ENCODE measurements at regions of chr4 and their contacts with region 1.

Region 1: GRCh38 chr4:139501927-139502899 is 48.3 kb downstream of the RAB33B start:
- DNase-seq: no peak
- ATAC-seq: no peak
- H3K4me3 Mint-ChIP-seq: no peak overlapping the region
- H3K27ac Mint-ChIP-seq: no peak overlapping the region
- H3K4me1 Mint-ChIP-seq: peaks cover 7% of the 10 kb centered on the region
- H3K27me3 Mint-ChIP-seq: peaks cover 2% of the 10 kb centered on the region

Region 2: DNA sequence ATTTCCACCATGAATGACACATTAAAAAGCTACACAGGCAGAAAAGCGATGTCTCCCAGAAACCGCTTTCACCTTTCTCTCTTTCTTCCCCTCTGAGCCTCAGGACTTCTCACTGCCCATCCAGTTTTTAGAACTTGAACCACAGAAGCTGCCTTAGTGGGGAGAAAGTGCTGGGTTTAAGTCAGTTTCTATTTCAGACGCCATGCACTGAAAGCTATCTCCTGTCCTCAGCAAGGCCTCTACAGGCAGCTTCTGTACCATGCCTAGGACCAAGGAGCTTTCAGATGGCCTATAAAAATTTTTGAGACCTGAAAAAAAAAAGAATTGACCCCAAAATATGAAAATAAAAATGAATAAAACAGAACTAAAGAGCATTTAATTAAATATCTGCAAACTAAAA is 13.8 kb before region 1 on chr4:
- CTCF ChIA-PET with region 1: interaction called, 10 read pairs
- POLR2A ChIA-PET with region 1: no interaction called
- DNase-seq: no peak
- ATAC-seq: no peak
- H3K4me3 Mint-ChIP-seq: no peak overlapping the region
- H3K27ac Mint-ChIP-seq: no peak overlapping the region
- H3K4me1 Mint-ChIP-seq: no peaks in the 10 kb centered on the region
- H3K27me3 Mint-ChIP-seq: peaks cover 4% of the 10 kb centered on the region

Region 3: GRCh38 chr4:139515531-139515958 is 13.3 kb after region 1 on chr4:
- CTCF ChIA-PET with region 1: no interaction called
- POLR2A ChIA-PET with region 1: no interaction called
- DNase-seq: no peak
- ATAC-seq: no peak
- H3K4me3 Mint-ChIP-seq: no peak overlapping the region
- H3K27ac Mint-ChIP-seq: no peak overlapping the region
- H3K4me1 Mint-ChIP-seq: no peaks in the 10 kb centered on the region
- H3K27me3 Mint-ChIP-seq: no peaks in the 10 kb centered on the region

Region 4: GRCh38 chr4:139746431-139747171 is 244.4 kb after region 1 on chr4:
- CTCF ChIA-PET with region 1: no interaction called
- POLR2A ChIA-PET with region 1: no interaction called
- DNase-seq: no peak
- ATAC-seq: no peak
- H3K4me3 Mint-ChIP-seq: no peak overlapping the region
- H3K27ac Mint-ChIP-seq: no peak overlapping the region
- H3K4me1 Mint-ChIP-seq: peaks cover 16% of the 10 kb centered on the region
- H3K27me3 Mint-ChIP-seq: no peaks in the 10 kb centered on the region